Pancreas (tissue), 10 donors: ENCODE measurements at regions of chrX and their contacts with region 1.

Region 1: DNA sequence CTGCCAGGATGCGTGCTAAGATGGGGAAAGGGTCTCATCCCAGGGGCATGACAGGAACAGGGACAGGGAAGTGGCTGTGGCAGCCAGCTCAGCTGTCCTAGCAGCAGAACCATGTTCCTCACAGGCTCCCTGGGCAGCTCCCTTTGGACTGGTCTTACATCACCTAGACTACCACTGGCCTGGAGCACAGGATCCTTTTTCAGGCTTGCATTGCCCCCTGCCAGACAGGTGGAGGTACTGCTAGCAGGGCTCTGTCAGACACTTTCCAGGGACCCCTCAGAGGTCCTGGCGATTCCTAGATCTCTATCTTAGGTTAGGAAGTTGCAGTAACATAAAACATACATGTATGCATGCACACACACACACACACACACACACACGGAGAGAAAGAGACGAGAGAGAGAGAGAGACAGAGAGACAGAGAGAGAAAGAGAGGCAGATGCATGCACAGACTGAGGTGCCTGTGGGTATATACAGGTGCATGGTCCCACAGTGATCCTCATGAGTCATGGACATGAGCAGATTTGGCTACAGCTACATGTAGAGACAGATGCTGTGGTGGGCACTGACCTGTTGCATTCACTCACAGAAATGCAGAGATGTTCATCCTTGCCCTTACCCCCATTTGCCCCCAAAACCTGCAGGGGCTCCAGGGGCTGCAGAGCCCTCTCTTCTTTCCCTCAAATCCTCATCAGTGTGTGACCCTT is 63.6 kb downstream of the STARD8 start:
- DNase-seq: peak in 4 of 6 donors; percentile 19 to 48 (median 37)
- ATAC-seq: peak; percentile 84 to 97 (median 91)
- H3K4me3 ChIP-seq: no peak overlapping the region
- H3K27ac ChIP-seq: no peak overlapping the region
- H3K4me1 ChIP-seq: no peaks in the 10 kb centered on the region
- H3K27me3 ChIP-seq: no peaks in the 10 kb centered on the region
- CTCF ChIP-seq: peak in 3 of 4 donors; percentile 21 to 45 (median 39)

Region 2: DNA sequence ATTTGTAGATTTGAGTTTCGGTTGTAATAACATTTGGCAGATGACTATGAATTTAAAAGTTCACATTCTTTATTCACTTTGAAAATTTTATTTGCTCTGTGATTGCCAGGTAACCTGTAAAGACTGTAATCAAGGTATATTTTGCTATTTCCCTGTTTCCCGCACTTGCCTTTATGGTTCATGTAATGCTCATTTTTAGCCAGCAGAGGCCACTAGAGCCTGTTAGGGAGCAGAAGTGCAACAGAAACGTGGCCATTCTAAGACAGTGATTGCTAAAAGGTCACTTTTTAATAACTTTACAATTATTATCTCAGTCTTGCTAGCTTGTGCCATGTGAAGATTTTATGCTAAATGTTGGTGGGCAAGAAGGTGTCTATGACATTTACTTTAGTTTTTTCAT is 199.8 kb before region 1 on chrX:
- intact Hi-C with region 1: loop called in 1 of 3 experiments (anchors 5 kb)
- DNase-seq: peak in 1 of 6 donors; percentile 43
- ATAC-seq: peak; percentile 55 to 87 (median 82)
- H3K4me3 ChIP-seq: no peak overlapping the region
- H3K27ac ChIP-seq: no peak overlapping the region
- H3K4me1 ChIP-seq: no peaks in the 10 kb centered on the region
- H3K27me3 ChIP-seq: peaks cover 0 to 6% (median 0%) of the 10 kb centered on the region in 4 donors
- CTCF ChIP-seq: peak; percentile 43 to 83 (median 78)

Region 3: DNA sequence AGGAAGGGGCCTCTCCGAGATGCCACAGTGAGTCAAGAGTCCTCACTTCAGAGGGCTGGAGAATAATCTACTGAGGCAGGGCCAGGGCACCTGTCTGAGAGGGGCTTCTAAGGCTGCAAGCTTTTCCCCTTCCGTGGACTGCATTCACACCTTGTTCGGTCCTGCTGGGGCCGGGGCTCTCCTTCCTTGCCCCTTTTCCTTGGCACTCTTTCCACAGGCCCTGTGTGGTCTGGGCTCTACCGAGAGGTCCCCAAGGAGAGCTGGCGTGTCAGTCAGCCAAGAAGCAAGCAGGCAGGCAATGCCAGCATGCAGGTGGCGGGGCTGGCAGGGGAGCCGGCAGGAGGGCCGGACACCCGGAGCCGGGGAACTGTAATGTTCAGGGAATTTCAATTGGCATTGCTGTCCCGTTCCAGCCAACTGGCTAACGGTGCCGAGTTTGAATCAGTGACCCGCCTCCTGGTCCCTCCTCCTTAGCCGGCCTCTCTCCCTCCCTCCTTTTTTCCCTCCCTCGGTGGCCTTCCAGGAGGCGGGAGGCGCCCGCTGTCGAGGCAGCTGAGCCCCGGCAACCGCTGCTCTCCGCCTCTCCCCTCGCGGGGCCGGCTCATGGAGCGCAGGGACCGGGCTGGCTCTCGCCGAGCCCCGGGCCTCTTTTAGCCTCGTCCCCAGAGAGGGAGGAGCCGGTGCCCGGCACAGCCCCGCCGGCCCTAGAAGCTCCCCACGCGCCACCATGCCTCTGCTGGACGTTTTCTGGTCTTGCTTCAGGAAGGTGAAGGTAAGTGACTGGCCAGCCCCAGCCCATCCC is 63.7 kb before region 1 on chrX and contains the start of gene STARD8:
- intact Hi-C with region 1: no loop called
- DNase-seq: peak; percentile 13 to 78 (median 36)
- ATAC-seq: peak; percentile 76 to 86 (median 82)
- H3K4me3 ChIP-seq: peak within 1 kb of the TSS in 2 of 4 donors; percentile 19 to 25
- H3K27ac ChIP-seq: no peak within 1 kb of the TSS
- H3K4me1 ChIP-seq: no peaks in the 10 kb centered on the region
- H3K27me3 ChIP-seq: peaks cover 0 to 3% (median 0%) of the 10 kb centered on the region in 4 donors
- CTCF ChIP-seq: no peak
- total RNA-seq, gene STARD8: 2.3 to 3.7 (median 2.7) TPM